HepG2 (cell line): ENCODE measurements at regions of chr10 and their contacts with region 1.

Region 1: GRCh38 chr10:49592726-49593563 is 17.2 kb upstream of the SLC18A3 start:
- DNase-seq: peak; percentile 53
- ATAC-seq: peak; percentile 83
- H3K4me3 ChIP-seq: no peak overlapping the region
- H3K27ac ChIP-seq: no peak overlapping the region
- H3K4me1 ChIP-seq: peaks cover 12% of the 10 kb centered on the region; the same call in 1 of the 2 replicates
- H3K27me3 ChIP-seq: peaks cover 0 to 13% of the 10 kb centered on the region in 2 experiments; a peak in 2 of 5 replicates
- CTCF ChIP-seq: peak; percentile 82
- EP300 ChIP-seq: no peak
- POLR2A ChIP-seq: no peak
- RAD21 ChIP-seq: no peak

Region 2: GRCh38 chr10:49761789-49762565 is 169.0 kb after region 1 on chr10 and contains the start of gene OGDHL:
- CTCF ChIA-PET with region 1: no interaction called
- POLR2A ChIA-PET with region 1: no interaction called
- in situ Hi-C with region 1: loop called (anchors 10 kb)
- intact Hi-C with region 1: loop called (anchors 5 kb)
- DNase-seq: peak; percentile 28
- ATAC-seq: peak; percentile 92
- H3K4me3 ChIP-seq: peak within 1 kb of the TSS; percentile 80 to 83 (median 80)
- H3K27ac ChIP-seq: no peak within 1 kb of the TSS
- H3K4me1 ChIP-seq: peaks cover 17% of the 10 kb centered on the region
- H3K27me3 ChIP-seq: peaks cover 0 to 2% of the 10 kb centered on the region in 2 experiments; a peak in 2 of 5 replicates
- CTCF ChIP-seq: no peak; the same call in 1 of the 2 replicates
- EP300 ChIP-seq: no peak
- POLR2A ChIP-seq: no peak
- RAD21 ChIP-seq: peak; percentile 47
- total RNA-seq, gene OGDHL: 1.6 and 3.0 TPM in 2 replicates